ENCODE measurements at regions of chr9 and their contacts with region 1.

Region 1: GRCh38 chr9:37465249-37466036 is at the start of gene ZBTB5:
- DNase-seq: peak; percentile 99
- total RNA-seq, gene ZBTB5: 6.9 to 7.4 TPM

Region 2: GRCh38 chr9:37410969-37411785 is 54.3 kb before region 1 on chr9:
- intact Hi-C with region 1: loop called in 1 of 2 experiments (anchors 5 kb)
- DNase-seq: peak; percentile 74